ENCODE measurements at regions of chr16 and their contacts with region 1.

Region 1: GRCh38 chr16:70770626-70771552 is 30.1 kb downstream of the VAC14 start:
- H3K4me3 ChIP-seq: no peak overlapping the region
- H3K27ac ChIP-seq: no peak overlapping the region
- H3K4me1 ChIP-seq: no peaks in the 10 kb centered on the region
- CTCF ChIP-seq: peak; percentile 77

Region 2: DNA sequence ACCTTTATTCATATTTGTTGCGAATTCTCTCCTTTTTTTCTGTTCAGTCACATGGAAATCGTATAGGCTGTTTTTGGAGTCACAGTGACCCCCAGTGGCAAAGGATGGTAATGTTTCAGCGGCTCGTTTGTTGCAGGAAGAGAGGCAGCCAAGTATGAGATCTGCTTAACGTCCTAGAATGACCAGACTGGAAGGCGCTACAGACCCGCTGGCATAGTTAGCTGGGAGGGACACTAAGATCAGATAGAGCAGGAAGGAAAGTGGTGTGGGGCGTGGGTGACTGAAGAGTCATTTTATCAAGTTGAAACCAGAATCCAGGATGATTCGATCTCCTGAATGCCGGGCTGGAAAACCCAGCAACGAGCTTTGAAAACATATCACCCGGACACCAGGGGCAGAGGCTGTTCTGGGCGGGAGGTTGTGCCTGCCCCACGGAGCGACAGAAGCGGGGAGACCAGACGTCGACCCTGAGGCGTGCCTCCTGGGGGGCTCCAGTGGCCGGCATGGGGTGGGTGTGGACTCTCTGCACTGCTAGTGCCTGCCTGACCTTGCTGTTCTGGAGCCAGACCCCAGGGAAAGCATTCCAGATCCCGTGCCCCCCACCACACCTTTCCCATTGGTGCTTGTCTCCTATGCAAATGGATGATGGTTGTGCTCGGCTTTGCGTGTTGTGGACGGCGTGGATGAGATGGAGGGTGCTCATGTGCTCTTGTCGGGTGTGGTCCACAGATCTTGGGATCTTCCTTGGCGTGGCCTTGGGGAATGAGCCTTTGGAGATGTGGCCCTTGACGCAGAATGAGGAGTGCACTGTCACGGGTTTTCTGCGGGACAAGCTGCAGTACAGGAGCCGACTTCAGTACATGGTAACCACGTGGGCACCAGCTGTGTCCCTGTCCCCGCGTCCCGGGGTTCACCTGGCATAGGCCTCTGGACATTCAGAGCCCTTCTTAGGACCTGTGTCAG is 116.8 kb before region 1 on chr16:
- CTCF ChIA-PET with region 1: interaction called, 27 read pairs
- POLR2A ChIA-PET with region 1: no interaction called
- H3K4me3 ChIP-seq: no peak overlapping the region; the same call in 1 of the 2 replicates
- H3K27ac ChIP-seq: no peak overlapping the region
- H3K4me1 ChIP-seq: no peaks in the 10 kb centered on the region
- CTCF ChIP-seq: peak; percentile 93

Region 3: GRCh38 chr16:70747703-70748631 is 22.9 kb before region 1 on chr16:
- CTCF ChIA-PET with region 1: interaction called, 11 read pairs
- POLR2A ChIA-PET with region 1: no interaction called
- H3K4me3 ChIP-seq: no peak overlapping the region
- H3K27ac ChIP-seq: no peak overlapping the region
- H3K4me1 ChIP-seq: peaks cover 11% of the 10 kb centered on the region; the same call in 1 of the 2 replicates
- CTCF ChIP-seq: no peak

Region 4: GRCh38 chr16:70759666-70760065 is 11.2 kb before region 1 on chr16:
- CTCF ChIA-PET with region 1: interaction called, 15 read pairs
- POLR2A ChIA-PET with region 1: interaction called, 4 read pairs
- H3K4me3 ChIP-seq: no peak overlapping the region
- H3K27ac ChIP-seq: no peak overlapping the region
- H3K4me1 ChIP-seq: no peaks in the 10 kb centered on the region
- CTCF ChIP-seq: no peak